ENCODE measurements at regions of chr19 and their contacts with region 1.

Region 1: DNA sequence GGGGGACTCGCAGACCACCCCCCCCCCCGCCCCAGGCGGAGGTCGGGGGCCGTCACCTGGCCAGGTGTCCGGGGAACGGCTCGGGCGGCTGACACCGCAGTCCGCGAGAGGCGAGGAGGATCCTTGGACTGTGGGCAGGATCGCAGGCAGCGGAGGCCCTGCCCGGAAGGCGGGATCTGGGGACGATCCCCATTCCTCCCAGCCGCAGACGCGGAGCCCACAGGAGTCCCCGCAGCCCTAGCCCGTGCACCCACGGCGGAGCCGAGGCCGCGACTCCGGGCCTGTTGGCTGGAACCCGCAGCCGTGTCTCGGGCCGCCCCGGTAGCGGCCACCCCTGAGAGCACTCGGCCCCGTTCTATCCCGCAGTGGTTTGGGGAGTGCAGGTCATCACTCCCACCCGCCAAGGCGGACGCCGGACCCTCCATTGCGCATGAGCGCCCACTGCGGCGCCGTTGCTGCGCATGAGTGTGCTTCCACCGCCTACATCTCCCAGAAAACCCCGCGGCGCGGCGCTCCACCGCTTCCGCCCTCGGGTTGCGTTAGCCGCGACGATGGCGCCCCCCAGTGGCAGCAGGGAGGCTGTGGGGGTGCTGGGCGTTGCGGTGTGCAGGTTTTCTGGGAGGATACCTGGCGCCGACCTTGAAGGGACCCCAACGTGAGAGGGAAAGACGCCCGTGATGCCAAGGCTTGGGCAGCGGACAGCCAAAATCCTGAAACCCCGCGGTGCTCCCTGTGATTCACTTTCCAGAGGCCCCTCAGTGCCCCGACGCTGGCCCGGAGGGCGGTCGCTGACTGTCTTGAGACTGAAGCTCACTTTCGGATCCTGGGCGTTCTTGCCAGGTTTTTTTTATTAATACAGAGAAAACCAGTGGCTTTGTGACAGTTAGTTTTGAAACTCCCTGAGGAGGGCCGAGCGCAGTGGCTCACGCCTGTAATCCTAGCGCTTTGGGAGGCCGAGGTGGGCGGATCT is 4.4 kb upstream of the ZNF329 start:
- DNase-seq: peak; percentile 96
- ATAC-seq: peak; percentile 98 to 99
- H3K4me3 ChIP-seq: peak overlapping the region; percentile 92
- H3K27ac ChIP-seq: peak overlapping the region; percentile 90
- H3K4me1 ChIP-seq: peaks cover 20% of the 10 kb centered on the region
- H3K27me3 ChIP-seq: no peaks in the 10 kb centered on the region
- CTCF ChIP-seq: peak; percentile 95

Region 2: GRCh38 chr19:58021541-58022282 is 133.3 kb before region 1 on chr19:
- intact Hi-C with region 1: loop called (anchors 5 kb)
- DNase-seq: no peak
- ATAC-seq: peak; percentile 66 to 82
- H3K4me3 ChIP-seq: no peak overlapping the region
- H3K27ac ChIP-seq: no peak overlapping the region
- H3K4me1 ChIP-seq: no peaks in the 10 kb centered on the region
- H3K27me3 ChIP-seq: no peaks in the 10 kb centered on the region
- CTCF ChIP-seq: peak; percentile 66

Region 3: GRCh38 chr19:58203814-58204475 is 49.0 kb after region 1 on chr19:
- intact Hi-C with region 1: no loop called
- DNase-seq: no peak
- ATAC-seq: peak in 1 of 2 donors; percentile 13
- H3K4me3 ChIP-seq: no peak overlapping the region
- H3K27ac ChIP-seq: no peak overlapping the region
- H3K4me1 ChIP-seq: no peaks in the 10 kb centered on the region
- H3K27me3 ChIP-seq: no peaks in the 10 kb centered on the region
- CTCF ChIP-seq: no peak

Measured in lower lobe of right lung (tissue), 2 donors.